ENCODE measurements at regions of chr15 and their contacts with region 1.

Region 1: DNA sequence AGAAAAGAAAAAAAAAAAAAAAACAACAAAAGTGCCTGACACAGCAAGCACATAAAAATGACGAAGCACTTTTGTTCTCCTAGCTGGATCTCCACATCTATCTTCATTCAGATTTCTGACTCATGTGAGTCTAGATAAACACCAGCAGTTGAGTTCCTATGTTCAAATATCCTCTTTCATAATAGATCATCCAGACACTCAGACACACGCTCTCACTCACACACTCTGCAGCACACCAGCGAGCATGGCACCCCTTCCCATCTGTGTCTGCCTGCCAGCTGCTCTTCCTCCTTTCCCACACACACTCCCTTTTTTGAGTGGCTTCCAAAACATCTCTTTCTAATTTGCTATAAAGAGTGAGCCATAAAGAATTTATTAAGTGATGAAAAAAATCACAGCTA is 19.8 kb upstream of the CELF6 start:
- DNase-seq: no peak
- ATAC-seq: peak in 1 of 8 donors; percentile 39
- H3K4me3 ChIP-seq: no peak overlapping the region
- H3K27ac ChIP-seq: peak overlapping the region in 1 of 10 donors; percentile 73
- H3K4me1 ChIP-seq: peaks cover 0 to 20% (median 0%) of the 10 kb centered on the region in 9 donors
- H3K27me3 ChIP-seq: no peaks in the 10 kb centered on the region
- CTCF ChIP-seq: no peak

Region 2: GRCh38 chr15:71891026-71891425 is 448.8 kb before region 1 on chr15:
- intact Hi-C with region 1: no loop called
- DNase-seq: peak in 1 of 2 donors; percentile 5
- ATAC-seq: peak; percentile 38 to 98 (median 79)
- H3K4me3 ChIP-seq: no peak overlapping the region
- H3K27ac ChIP-seq: peak overlapping the region in 3 of 10 donors; percentile 33 to 41 (median 37)
- H3K4me1 ChIP-seq: peaks cover 0 to 15% (median 0%) of the 10 kb centered on the region in 9 donors
- H3K27me3 ChIP-seq: no peaks in the 10 kb centered on the region
- CTCF ChIP-seq: no peak

Region 3: DNA sequence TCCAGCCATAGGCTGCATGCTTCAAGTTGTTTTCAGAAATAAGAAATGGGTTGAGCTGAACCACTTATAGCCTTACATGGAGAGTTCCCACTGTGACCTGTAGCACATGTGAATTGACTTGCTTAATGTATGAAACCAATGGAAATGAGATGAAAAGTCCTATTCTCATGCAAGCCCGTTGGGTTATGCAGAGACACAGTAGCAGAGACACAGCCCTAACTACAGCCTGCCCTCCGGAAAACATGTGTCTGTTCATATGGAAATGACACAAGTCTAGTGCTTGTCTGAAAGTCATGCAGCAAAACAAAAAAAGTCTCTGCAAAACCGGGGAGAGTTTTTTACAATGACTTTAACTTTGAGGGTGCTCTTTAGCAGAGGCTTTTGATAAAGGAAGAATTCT is 331.8 kb after region 1 on chr15:
- intact Hi-C with region 1: loop called in 1 of 10 experiments (anchors 10 kb)
- DNase-seq: no peak
- ATAC-seq: no peak
- H3K4me3 ChIP-seq: no peak overlapping the region
- H3K27ac ChIP-seq: no peak overlapping the region
- H3K4me1 ChIP-seq: peaks cover 0 to 5% (median 0%) of the 10 kb centered on the region in 9 donors
- H3K27me3 ChIP-seq: peaks cover 0 to 40% (median 30%) of the 10 kb centered on the region in 7 donors
- CTCF ChIP-seq: no peak